HEK293 (cell line): ENCODE measurements at regions of chr9 and their contacts with region 1.

Region 1: DNA sequence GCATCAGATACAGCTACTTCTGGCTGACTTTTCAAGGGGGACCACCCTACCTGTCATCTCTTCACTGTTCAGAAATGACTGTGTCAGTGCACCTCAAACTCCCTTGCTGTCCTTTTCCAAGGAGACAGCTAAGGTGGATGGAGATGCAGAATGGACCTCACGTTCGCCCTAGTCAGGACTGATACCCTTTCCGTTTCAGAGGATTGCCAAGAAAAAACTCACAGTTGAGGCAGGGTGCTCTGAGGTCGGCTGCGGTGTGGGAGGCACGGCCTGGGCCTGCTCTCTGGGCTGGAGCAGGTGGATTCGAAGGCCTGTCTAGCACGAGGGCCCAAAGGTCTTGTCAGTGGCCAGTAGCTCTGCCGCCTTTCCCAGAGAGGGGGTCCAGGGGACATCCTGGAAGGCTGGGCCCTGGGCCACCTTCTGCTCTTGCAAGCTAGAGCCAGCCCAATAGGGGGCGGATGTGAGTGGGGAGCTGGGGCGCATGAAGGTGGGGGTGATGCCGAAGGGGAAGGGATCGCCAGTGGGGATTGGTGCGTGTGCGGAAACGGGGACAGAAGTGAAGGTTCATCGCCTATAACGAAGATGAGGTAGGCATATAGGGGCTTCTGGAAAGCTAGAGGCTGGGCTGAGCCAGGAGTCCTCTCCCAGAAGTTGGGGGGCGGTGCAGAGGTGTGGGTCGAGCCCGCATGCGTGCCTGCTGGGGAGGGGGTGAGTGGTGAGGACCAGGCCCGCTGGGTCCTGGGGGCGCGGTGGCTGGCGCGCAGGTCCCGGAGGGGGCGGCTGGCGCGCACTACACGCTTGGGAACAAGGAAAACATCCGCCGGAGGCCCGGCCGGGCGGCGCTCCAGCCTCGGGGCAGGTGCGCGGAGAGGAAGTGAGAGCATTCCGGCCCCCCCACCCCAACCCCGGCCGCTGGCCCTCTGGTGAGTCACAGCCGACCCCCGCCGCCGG is 2.5 kb upstream of the MSMP start:
- H3K4me3 ChIP-seq: peak overlapping the region; percentile 71
- H3K27ac ChIP-seq: peak overlapping the region; percentile 94
- H3K4me1 ChIP-seq: peaks cover 10% of the 10 kb centered on the region
- CTCF ChIP-seq: peak; percentile 89

Region 2: GRCh38 chr9:35675732-35676392 is 80.7 kb before region 1 on chr9:
- CTCF ChIA-PET with region 1: no interaction called
- POLR2A ChIA-PET with region 1: no interaction called
- H3K4me3 ChIP-seq: no peak overlapping the region
- H3K27ac ChIP-seq: no peak overlapping the region
- H3K4me1 ChIP-seq: no peaks in the 10 kb centered on the region
- CTCF ChIP-seq: no peak

Region 3: GRCh38 chr9:35743452-35743851 is 13.1 kb before region 1 on chr9:
- CTCF ChIA-PET with region 1: interaction called, 12 read pairs
- POLR2A ChIA-PET with region 1: interaction called, 21 read pairs
- H3K4me3 ChIP-seq: no peak overlapping the region
- H3K27ac ChIP-seq: no peak overlapping the region
- H3K4me1 ChIP-seq: no peaks in the 10 kb centered on the region; the same call in 1 of the 2 replicates
- CTCF ChIP-seq: no peak